Activated CD8-positive, alpha-beta T cell treated with anti-CD3 and anti-CD28 coated beads for 36 hours (primary cell): ENCODE measurements at regions of chr12 and their contacts with region 1.

Region 1: GRCh38 chr12:80186727-80187217 is 87.4 kb downstream of the OTOGL start:
- DNase-seq: peak; percentile 49
- ATAC-seq: peak; percentile 57
- H3K4me3 Mint-ChIP-seq: no peak overlapping the region
- H3K27ac Mint-ChIP-seq: no peak overlapping the region
- H3K4me1 Mint-ChIP-seq: peaks cover 11% of the 10 kb centered on the region
- H3K27me3 Mint-ChIP-seq: peaks cover 4% of the 10 kb centered on the region
- CTCF ChIP-seq: peak; percentile 70

Region 2: DNA sequence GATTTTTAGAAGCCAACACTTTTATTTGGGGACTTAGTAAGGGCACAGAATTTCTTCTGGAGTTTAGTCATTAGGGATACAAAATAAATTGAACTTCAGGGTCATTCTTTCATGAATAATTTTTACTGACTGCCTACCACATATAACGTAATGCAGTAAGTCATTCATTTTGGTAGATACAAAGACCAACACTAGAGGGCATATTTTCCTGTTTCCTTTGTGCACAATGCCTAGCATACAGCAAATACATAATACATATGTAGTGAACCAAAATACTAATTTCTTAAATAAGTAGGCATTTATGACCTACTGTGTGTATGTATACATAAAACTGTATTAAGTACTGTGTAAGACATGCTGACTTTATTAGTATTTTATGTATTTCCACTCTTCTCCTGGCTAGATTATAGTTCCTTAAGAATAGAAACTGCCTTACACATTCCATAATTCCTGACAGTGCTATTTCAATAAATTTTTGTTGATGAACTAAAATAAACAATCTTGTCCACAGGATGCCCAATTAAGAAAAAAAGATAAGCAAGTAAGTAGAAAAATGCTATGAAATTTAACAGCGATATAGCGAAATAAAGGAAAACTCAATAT is 299.8 kb before region 1 on chr12:
- CTCF ChIA-PET with region 1: interaction called, 5 read pairs
- POLR2A ChIA-PET with region 1: no interaction called
- intact Hi-C with region 1: loop called (anchors 5 kb)
- DNase-seq: no peak
- ATAC-seq: peak; percentile 78
- H3K4me3 Mint-ChIP-seq: no peak overlapping the region
- H3K27ac Mint-ChIP-seq: no peak overlapping the region
- H3K4me1 Mint-ChIP-seq: peaks cover 63% of the 10 kb centered on the region
- H3K27me3 Mint-ChIP-seq: no peaks in the 10 kb centered on the region
- CTCF ChIP-seq: peak; percentile 74

Region 3: GRCh38 chr12:79935021-79935623 is 251.7 kb before region 1 on chr12 and contains the start of gene PPP1R12A:
- CTCF ChIA-PET with region 1: no interaction called
- POLR2A ChIA-PET with region 1: no interaction called
- intact Hi-C with region 1: loop called (anchors 10 kb)
- DNase-seq: peak; percentile 95
- ATAC-seq: peak; percentile 86
- H3K4me3 Mint-ChIP-seq: peak within 1 kb of the TSS; percentile 100
- H3K27ac Mint-ChIP-seq: peak within 1 kb of the TSS; percentile 99
- H3K4me1 Mint-ChIP-seq: peaks cover 34% of the 10 kb centered on the region
- H3K27me3 Mint-ChIP-seq: no peaks in the 10 kb centered on the region
- CTCF ChIP-seq: no peak
- total RNA-seq, gene PPP1R12A: 56.6 to 57.8 TPM